ENCODE measurements at regions of chr19 and their contacts with region 1.

Region 1: DNA sequence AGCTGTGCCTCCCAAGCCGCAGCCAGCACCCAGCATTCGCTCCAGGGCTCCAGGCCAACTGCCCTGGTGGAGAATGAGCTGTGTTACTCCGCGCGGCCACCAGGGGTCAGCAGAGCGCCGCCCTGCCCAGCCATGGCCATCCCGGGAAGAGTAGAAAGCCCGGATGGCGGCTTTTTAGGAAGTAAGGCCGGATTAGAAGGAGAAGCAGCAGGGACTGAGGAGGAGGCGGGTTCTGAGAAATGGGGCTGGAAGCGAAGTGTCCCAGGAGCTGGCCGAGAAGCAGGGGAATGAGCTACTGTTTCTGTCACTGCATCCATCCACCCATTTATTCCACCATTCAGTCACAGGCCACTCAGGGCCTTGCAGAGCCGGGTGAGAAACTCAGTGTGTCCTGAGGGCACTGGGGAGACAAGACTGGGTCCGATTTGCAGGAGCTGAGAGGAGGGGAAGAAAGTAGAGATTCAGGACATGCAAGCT is 6.6 kb upstream of the NPAS1 start:
- DNase-seq: peak; percentile 91
- ATAC-seq: peak; percentile 96
- H3K4me3 Mint-ChIP-seq: no peak overlapping the region; the same call in 1 of the 2 replicates
- H3K27ac Mint-ChIP-seq: peak overlapping the region; percentile 81
- H3K4me1 Mint-ChIP-seq: peaks cover 4% of the 10 kb centered on the region
- H3K27me3 Mint-ChIP-seq: peaks cover 34% of the 10 kb centered on the region
- CTCF ChIP-seq: peak; percentile 98

Region 2: DNA sequence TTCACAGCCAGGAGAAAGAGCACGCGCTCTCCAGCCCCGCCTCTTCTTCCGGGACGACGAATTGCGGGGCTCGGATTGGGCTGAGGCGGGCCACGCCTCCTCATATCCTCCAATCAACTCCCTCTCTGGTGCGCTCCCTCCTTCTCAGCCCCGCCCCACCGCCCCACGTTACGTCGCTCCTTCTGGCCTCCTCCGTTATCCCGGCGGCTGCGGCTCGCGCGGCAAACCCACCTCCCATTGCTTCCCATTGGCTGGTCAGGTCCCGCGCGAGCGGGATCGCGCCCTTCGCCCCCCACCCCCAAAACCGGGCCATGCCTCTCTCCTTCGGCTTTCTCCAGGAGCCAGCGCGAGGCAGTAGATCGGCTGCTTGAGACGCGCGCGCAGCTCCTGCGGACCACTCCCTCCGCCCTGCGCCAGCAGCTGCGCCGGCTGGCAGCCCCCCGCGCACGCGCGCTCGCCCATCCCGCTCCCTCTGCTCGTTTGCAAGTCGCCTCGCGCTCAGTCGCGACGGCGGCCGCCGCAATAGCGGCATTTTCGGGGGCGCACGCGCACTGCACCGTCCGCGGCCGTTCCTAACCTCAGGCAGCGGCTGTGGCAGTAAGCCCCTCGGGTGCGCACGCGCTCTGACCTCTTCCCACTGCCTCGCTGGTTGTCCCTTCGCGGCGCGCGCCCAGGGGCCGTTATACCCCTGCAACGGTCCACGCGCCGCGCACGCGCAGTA is 152.8 kb before region 1 on chr19:
- CTCF ChIA-PET with region 1: interaction called, 15 read pairs
- POLR2A ChIA-PET with region 1: no interaction called
- DNase-seq: peak; percentile 98
- ATAC-seq: peak; percentile 76
- H3K4me3 Mint-ChIP-seq: peak overlapping the region; percentile 74
- H3K27ac Mint-ChIP-seq: peak overlapping the region; percentile 98
- H3K4me1 Mint-ChIP-seq: peaks cover 15% of the 10 kb centered on the region
- H3K27me3 Mint-ChIP-seq: peaks cover 6% of the 10 kb centered on the region
- CTCF ChIP-seq: no peak

Region 3: GRCh38 chr19:46990991-46991676 is 21.9 kb before region 1 on chr19:
- CTCF ChIA-PET with region 1: interaction called, 13 read pairs
- POLR2A ChIA-PET with region 1: no interaction called
- DNase-seq: peak; percentile 90
- ATAC-seq: peak; percentile 81
- H3K4me3 Mint-ChIP-seq: no peak overlapping the region
- H3K27ac Mint-ChIP-seq: peak overlapping the region; percentile 96
- H3K4me1 Mint-ChIP-seq: peaks cover 11% of the 10 kb centered on the region
- H3K27me3 Mint-ChIP-seq: no peaks in the 10 kb centered on the region
- CTCF ChIP-seq: peak; percentile 60

Region 4: DNA sequence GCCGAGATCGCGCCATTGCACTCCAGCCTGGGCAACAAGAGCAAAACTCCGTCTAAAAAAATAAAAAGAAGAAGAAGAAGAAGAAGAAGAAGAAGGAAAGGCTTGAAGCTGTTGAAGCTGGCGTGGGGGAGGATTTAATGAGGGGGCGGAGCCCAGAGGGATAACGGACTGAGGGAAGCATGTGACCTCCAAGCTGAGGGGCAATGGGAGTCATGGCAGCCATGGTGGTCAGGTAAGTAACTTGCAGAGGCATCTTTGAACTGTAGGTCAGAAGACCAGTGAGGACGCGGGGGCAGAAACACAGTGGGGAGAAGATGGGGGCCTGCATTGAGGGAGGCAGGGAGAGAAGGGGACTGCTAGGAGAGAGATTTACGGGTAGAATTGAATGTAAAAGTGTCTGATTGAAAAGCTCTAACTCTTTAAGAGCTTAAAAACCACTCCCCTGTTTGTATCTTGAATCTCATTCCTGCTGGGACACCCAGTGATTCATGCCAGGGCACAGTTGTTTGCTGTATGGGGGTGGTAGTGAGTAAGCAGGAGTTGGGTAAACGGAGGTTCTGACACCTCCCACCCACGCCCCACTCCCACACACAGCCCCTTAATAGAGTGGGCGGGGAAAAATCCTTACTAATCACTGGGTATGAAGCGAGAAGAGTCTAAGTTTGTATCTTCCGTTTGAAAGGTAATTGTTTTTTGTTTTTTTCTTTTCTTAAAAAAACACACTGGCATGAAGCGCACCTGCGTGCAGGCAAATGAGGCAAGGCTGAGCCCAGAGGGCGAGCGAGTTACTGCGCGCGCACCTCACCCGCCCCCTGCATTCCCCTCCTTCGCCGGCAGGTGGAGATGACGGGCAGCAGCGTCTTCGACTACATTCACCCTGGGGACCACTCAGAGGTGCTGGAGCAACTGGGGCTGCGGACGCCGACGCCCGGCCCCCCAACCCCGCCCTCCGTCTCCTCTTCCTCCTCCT is 22.3 kb after region 1 on chr19:
- CTCF ChIA-PET with region 1: interaction called, 36 read pairs
- POLR2A ChIA-PET with region 1: no interaction called
- DNase-seq: peak; percentile 97
- ATAC-seq: peak; percentile 86
- H3K4me3 Mint-ChIP-seq: peak overlapping the region; percentile 88
- H3K27ac Mint-ChIP-seq: peak overlapping the region; percentile 87
- H3K4me1 Mint-ChIP-seq: peaks cover 18% of the 10 kb centered on the region
- H3K27me3 Mint-ChIP-seq: peaks cover 32% of the 10 kb centered on the region
- CTCF ChIP-seq: peak; percentile 98

Region 5: GRCh38 chr19:47075179-47075810 is 62.2 kb after region 1 on chr19:
- CTCF ChIA-PET with region 1: interaction called, 11 read pairs
- POLR2A ChIA-PET with region 1: no interaction called
- DNase-seq: no peak
- ATAC-seq: no peak
- H3K4me3 Mint-ChIP-seq: no peak overlapping the region
- H3K27ac Mint-ChIP-seq: peak overlapping the region; percentile 61
- H3K4me1 Mint-ChIP-seq: no peaks in the 10 kb centered on the region
- H3K27me3 Mint-ChIP-seq: no peaks in the 10 kb centered on the region
- CTCF ChIP-seq: no peak

Region 6: DNA sequence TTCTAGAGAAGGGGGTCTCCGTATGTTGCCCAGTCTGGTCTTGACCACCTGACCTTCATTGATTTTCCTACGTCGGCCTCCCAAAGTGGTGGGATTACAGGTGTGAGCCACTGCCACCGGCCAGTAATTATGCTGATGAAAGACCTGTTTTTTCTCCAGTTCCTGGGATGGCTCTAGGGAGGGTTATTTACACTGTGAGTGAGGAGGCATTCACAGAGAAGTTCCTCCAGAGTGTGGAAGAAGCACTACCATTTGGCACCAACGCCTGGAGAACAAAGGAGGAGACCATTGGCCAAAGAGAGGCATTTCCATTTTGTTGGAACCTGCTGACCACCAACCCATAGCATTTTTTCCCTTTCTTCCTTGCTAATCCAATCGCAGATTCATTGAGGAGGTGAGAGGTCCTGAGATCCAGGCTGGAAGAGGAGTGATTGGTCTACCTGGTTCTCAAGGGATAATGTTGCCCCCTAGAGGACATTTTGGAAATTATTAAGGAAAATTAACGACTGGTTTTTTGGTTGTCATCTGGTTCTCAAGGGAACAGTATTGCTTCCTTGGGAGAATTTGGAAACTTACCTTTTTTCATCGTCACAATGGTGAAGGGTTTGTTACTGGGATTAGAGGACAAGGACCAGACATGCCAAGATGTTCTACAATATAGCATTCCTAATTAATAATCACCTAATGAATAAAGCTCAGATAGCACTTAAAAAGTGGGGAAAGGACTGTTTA is 112.0 kb after region 1 on chr19:
- CTCF ChIA-PET with region 1: interaction called, 20 read pairs
- POLR2A ChIA-PET with region 1: no interaction called
- DNase-seq: no peak
- ATAC-seq: peak; percentile 93
- H3K4me3 Mint-ChIP-seq: no peak overlapping the region
- H3K27ac Mint-ChIP-seq: peak overlapping the region; percentile 69
- H3K4me1 Mint-ChIP-seq: peaks cover 6% of the 10 kb centered on the region
- H3K27me3 Mint-ChIP-seq: peaks cover 7% of the 10 kb centered on the region
- CTCF ChIP-seq: peak; percentile 55

Region 7: DNA sequence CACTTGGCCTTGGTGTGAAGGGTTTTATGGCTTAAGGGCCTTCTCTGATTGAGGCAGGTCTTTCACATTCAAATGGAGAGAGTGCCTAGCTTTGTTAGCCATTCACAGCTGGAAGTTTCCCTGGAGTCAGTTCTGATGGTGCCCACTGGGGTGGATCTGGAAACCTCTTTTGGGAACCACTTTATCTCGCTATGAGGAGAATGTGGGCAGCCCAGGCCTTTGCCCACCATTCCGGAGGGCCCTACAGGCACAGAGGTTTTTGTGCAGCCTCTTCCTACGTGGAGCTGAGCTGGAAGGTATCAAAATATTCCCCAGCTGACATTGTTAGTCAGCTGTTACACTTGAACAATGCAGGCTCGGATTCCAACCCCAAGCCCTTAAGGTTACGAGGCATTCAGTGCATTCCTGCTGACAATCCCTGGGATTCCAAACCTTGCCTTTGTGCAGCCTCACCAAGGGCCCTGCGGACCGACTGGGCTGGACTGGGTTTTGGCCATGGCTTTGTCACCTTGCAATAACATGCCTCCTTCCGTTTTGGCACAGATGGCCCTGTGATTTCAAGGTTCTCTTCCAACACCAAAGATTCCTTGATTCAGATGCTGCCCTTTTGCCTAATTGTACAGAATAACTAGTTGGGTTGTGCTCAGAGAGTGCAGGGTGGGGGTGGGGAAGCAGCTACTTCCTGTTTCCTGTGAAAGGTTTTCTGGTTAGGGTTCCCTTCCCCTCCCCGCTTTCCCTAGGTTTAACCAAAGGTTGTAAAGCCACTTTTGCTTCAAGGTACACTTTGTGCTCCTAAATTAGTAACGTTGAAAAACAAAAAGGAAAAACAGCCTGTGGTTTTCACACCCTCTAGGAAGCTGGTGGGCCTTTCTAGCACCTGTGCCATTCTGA is 144.6 kb after region 1 on chr19:
- CTCF ChIA-PET with region 1: interaction called, 10 read pairs
- POLR2A ChIA-PET with region 1: interaction called, 3 read pairs
- DNase-seq: peak; percentile 72
- ATAC-seq: peak; percentile 92
- H3K4me3 Mint-ChIP-seq: peak overlapping the region; percentile 51
- H3K27ac Mint-ChIP-seq: peak overlapping the region; percentile 99
- H3K4me1 Mint-ChIP-seq: peaks cover 43% of the 10 kb centered on the region
- H3K27me3 Mint-ChIP-seq: no peaks in the 10 kb centered on the region
- CTCF ChIP-seq: no peak

Measured in WTC11 (cell line).